Activated CD4-positive, alpha-beta memory T cell treated with anti-CD3 and anti-CD28 coated beads for 36 hours (primary cell): ENCODE measurements at regions of chr22 and their contacts with region 1.

Region 1: GRCh38 chr22:22787786-22788459 is 99.7 kb upstream of the IGLL5 start:
- DNase-seq: peak; percentile 77
- H3K4me3 Mint-ChIP-seq: no peak overlapping the region
- H3K27ac Mint-ChIP-seq: no peak overlapping the region
- H3K4me1 Mint-ChIP-seq: peaks cover 44% of the 10 kb centered on the region
- H3K27me3 Mint-ChIP-seq: no peaks in the 10 kb centered on the region

Region 2: GRCh38 chr22:22687638-22688500 is 100.1 kb before region 1 on chr22:
- CTCF ChIA-PET with region 1: no interaction called
- POLR2A ChIA-PET with region 1: no interaction called
- intact Hi-C with region 1: no loop called
- DNase-seq: peak; percentile 40
- H3K4me3 Mint-ChIP-seq: no peak overlapping the region
- H3K27ac Mint-ChIP-seq: no peak overlapping the region
- H3K4me1 Mint-ChIP-seq: no peaks in the 10 kb centered on the region
- H3K27me3 Mint-ChIP-seq: no peaks in the 10 kb centered on the region

Region 3: GRCh38 chr22:22737590-22737989 is 50.3 kb before region 1 on chr22:
- CTCF ChIA-PET with region 1: no interaction called
- POLR2A ChIA-PET with region 1: no interaction called
- intact Hi-C with region 1: no loop called
- DNase-seq: no peak
- H3K4me3 Mint-ChIP-seq: no peak overlapping the region
- H3K27ac Mint-ChIP-seq: no peak overlapping the region
- H3K4me1 Mint-ChIP-seq: peaks cover 4% of the 10 kb centered on the region
- H3K27me3 Mint-ChIP-seq: peaks cover 24% of the 10 kb centered on the region

Region 4: DNA sequence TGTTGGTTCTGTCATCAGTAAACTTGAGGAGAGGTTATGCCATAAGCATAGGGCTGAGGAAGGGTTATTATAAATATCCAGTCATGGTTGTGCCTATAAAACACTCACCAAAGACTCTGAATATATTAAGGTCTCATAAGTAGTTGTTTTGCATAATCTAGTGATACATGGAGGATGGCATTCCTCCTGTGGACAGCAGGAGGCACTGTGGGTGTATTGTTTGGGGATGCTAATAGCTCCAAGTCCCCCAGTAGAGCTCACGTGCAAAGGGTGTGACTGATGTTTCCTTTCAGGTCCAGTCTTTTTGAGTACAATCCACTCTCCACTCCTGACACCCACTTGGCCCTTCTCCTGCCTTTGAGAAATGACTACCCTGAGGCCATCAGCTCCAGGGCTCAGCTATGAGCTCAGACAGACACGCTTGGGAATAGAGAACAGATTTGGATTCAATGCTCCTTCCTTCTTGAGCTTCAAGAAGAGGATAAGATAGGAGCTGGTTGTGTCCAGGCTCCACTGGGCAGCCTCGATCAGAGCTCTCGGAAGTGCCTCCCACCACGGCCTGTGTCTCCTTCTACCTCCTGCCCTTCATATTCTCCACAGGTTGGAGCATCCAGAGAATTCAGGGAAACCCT is 14.5 kb after region 1 on chr22:
- CTCF ChIA-PET with region 1: interaction called, 56 read pairs
- POLR2A ChIA-PET with region 1: no interaction called
- intact Hi-C with region 1: loop called (anchors 1 kb)
- DNase-seq: peak; percentile 45
- H3K4me3 Mint-ChIP-seq: no peak overlapping the region
- H3K27ac Mint-ChIP-seq: no peak overlapping the region
- H3K4me1 Mint-ChIP-seq: peaks cover 9% of the 10 kb centered on the region
- H3K27me3 Mint-ChIP-seq: no peaks in the 10 kb centered on the region

Region 5: DNA sequence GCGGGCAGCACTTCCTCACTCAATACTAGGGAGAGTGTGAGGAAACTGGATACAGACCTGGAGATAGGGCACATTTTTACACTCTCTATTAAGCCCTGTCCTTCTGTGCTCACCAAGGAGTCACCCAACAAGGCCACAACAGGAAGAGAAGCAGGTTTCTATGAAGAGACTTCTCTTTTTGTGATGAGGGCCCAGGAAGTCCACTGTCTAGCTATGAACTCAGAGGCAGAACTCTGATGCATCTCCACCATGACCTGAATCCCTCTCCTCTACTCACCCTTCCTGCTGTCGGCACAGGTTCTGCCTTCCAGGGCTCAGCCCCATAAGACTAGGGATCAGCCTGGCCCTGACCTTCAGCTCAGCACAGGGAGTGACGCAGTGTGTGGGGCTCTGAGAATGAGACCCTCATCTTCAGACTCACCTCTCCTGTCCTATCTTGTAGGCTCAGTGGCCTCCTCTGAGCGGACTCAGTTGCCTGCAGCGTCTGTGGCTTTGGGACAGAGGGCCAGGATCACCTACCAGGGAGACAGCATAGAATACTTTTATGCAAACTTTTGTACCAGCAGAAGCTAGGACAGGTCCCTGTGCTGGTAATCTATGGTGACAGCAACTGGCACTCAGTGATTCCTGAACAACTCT is 50.3 kb after region 1 on chr22:
- CTCF ChIA-PET with region 1: no interaction called
- POLR2A ChIA-PET with region 1: no interaction called
- intact Hi-C with region 1: no loop called
- DNase-seq: no peak
- H3K4me3 Mint-ChIP-seq: no peak overlapping the region
- H3K27ac Mint-ChIP-seq: no peak overlapping the region
- H3K4me1 Mint-ChIP-seq: peaks cover 16% of the 10 kb centered on the region
- H3K27me3 Mint-ChIP-seq: no peaks in the 10 kb centered on the region

Region 6: DNA sequence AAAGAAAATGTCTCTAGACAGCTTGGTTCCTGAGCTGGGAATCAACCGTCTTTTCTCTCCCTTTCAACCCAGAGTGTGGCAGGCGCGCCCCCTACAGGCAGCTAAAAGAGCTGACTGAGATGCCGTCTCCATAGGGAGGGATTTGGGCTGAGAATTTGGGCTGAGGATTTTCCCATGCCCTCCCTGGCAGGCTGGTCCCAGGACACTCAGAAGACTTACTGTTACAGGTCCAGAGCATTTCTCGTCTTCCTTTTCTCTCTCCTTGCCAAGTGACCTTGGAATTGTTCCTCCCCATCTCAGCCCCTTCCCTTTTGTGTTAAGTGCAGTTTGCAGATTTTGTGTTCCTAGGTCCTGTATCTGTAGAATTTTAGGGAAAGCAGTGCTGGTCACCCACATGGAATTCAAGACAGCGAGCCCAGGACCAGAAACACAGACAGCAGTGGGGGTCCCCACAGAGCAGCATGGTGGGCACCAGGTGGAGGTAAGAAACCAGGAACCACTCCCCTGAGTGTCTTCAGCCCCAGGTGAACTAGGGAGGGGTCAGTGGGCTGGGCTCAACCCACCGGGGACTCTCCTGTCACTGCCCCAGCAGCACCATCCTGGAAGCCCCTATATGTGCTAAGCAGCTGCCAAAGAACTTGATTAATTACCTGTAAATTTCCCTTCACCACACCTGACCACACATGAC is 89.7 kb after region 1 on chr22:
- CTCF ChIA-PET with region 1: interaction called, 28 read pairs
- POLR2A ChIA-PET with region 1: no interaction called
- intact Hi-C with region 1: no loop called
- DNase-seq: peak; percentile 82
- H3K4me3 Mint-ChIP-seq: no peak overlapping the region
- H3K27ac Mint-ChIP-seq: no peak overlapping the region
- H3K4me1 Mint-ChIP-seq: no peaks in the 10 kb centered on the region
- H3K27me3 Mint-ChIP-seq: no peaks in the 10 kb centered on the region

Region 7: GRCh38 chr22:22942511-22943329 is 154.8 kb after region 1 on chr22:
- CTCF ChIA-PET with region 1: interaction called, 14 read pairs
- POLR2A ChIA-PET with region 1: no interaction called
- intact Hi-C with region 1: no loop called
- DNase-seq: peak; percentile 83
- H3K4me3 Mint-ChIP-seq: no peak overlapping the region
- H3K27ac Mint-ChIP-seq: no peak overlapping the region
- H3K4me1 Mint-ChIP-seq: peaks cover 5% of the 10 kb centered on the region
- H3K27me3 Mint-ChIP-seq: peaks cover 4% of the 10 kb centered on the region